Activated CD4-positive, alpha-beta memory T cell treated with anti-CD3 and anti-CD28 coated beads, Interleukin-2, amount 10 ng/mL, durations not matched to agents 7 days and 5 days (primary cell): ENCODE measurements at regions of chr4 and their contacts with region 1.

Region 1: DNA sequence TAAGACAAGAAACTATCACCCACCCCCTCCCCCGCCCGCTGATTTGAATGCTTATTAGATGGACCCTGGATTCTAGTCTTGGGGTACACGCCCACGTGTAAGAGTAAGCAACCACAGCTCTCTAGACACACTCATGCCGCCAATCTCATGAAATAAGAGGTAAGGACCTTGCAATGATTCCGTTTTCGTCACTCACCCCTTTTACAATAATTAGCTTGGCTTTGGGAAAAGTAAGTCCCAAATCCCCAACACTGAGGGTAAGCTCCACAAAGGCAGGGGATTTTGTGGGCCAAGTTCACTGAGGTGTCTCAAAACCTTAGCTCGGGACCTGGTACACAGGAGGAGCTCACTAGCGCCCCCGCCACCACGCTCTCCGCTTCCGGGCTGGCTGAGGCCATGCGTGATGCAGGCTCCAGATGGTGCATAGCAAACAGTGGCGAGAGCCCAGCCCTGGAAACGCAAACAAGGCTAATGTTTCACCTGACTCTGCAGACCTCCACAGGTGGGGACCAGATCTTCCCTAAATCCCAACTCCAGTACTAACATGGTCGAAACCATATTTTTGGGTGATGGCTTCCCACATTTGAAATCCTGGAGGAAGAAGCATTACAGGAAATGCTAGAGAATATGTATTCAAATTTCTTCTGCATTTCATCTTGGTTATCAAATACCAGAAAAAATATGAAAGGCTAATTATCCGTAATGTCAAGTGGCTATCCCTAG is 4.1 kb downstream of the PLAC8 start:
- DNase-seq: peak; percentile 91
- H3K4me3 Mint-ChIP-seq: peak overlapping the region; percentile 84
- H3K27ac Mint-ChIP-seq: peak overlapping the region; percentile 89
- H3K4me1 Mint-ChIP-seq: peaks cover 57% of the 10 kb centered on the region
- H3K27me3 Mint-ChIP-seq: peaks cover 3% of the 10 kb centered on the region

Region 2: DNA sequence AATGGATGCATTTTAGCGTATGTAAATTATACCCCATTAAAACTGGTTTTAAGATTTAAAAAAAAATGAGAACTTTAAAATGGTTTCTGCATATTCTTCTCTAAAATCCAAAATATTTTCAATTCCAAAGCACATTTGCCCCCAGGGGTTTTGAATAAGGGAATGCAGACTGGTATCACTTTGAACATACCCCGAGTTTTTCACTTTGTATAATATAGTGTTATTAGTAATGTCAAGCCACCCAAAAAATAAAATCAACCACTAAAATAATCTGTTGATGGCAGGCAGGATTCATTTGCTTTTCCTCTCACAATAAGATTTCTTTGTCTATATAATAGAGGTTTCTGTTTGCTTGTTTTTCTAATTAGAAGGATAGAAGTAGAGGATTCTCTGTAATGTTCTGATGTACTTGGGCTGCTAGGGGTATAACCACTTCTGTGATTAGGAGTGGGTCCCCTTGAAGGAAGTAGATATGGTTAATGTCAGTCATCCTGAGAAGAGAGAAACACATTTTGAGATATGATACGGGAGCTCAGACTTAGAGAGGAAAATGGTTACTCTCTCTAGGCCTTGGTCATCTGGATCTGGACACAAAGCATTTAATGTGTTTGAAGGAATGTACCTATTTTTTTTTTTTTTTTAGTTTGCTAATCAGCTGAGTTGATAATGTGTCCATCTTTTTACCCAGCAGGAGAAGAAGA is 90.4 kb before region 1 on chr4:
- CTCF ChIA-PET with region 1: no interaction called
- POLR2A ChIA-PET with region 1: no interaction called
- DNase-seq: no peak
- H3K4me3 Mint-ChIP-seq: no peak overlapping the region
- H3K27ac Mint-ChIP-seq: no peak overlapping the region
- H3K4me1 Mint-ChIP-seq: peaks cover 8% of the 10 kb centered on the region
- H3K27me3 Mint-ChIP-seq: peaks cover 5% of the 10 kb centered on the region

Region 3: GRCh38 chr4:83074086-83074704 is 36.2 kb before region 1 on chr4:
- CTCF ChIA-PET with region 1: interaction called, 31 read pairs
- POLR2A ChIA-PET with region 1: interaction called, 8 read pairs
- DNase-seq: peak; percentile 58
- H3K4me3 Mint-ChIP-seq: peak overlapping the region; percentile 19
- H3K27ac Mint-ChIP-seq: peak overlapping the region; percentile 17
- H3K4me1 Mint-ChIP-seq: peaks cover 22% of the 10 kb centered on the region
- H3K27me3 Mint-ChIP-seq: peaks cover 1% of the 10 kb centered on the region

Region 4: DNA sequence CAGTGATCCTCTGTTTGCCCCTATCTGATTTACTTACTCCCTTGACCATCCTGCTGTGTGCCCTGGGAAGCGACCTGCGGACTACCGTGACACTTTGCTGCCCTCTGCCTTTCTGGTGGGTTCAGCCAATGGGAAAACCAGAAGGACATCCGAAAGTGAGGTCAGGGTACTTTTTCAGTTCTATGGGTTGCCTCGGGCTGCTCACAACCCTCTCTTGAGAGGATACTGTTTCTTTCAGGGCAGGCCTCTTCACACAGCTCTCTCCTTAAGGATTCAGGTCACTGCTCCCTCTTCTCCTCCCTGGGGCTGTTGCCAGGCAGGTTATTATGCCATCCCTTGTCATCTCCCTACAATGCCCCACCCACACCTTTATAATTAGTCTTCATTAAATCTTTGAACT is 17.3 kb before region 1 on chr4:
- CTCF ChIA-PET with region 1: interaction called, 15 read pairs
- POLR2A ChIA-PET with region 1: interaction called, 15 read pairs
- DNase-seq: no peak
- H3K4me3 Mint-ChIP-seq: no peak overlapping the region
- H3K27ac Mint-ChIP-seq: no peak overlapping the region
- H3K4me1 Mint-ChIP-seq: no peaks in the 10 kb centered on the region
- H3K27me3 Mint-ChIP-seq: no peaks in the 10 kb centered on the region

Region 5: DNA sequence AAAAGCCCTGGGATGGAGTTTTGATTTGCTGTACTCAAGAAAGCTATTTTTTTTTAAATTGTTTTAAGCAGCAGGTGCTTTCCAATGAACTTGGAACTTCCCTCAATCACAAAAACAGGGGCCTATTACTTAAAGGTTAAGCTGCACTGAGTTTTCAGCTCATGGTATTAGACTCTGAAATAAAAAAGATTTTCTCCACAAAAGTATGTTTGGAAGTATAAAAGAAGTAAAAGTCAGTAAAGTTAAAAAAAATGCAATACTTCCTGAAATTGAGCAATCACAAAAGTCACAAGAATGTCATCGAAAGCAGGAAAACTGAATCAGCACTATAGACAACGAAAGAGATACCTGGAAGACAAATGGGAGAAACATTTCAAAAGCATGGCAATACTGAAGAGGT is 43.0 kb after region 1 on chr4:
- CTCF ChIA-PET with region 1: no interaction called
- POLR2A ChIA-PET with region 1: no interaction called
- DNase-seq: no peak
- H3K4me3 Mint-ChIP-seq: no peak overlapping the region
- H3K27ac Mint-ChIP-seq: no peak overlapping the region
- H3K4me1 Mint-ChIP-seq: peaks cover 14% of the 10 kb centered on the region
- H3K27me3 Mint-ChIP-seq: peaks cover 26% of the 10 kb centered on the region

Region 6: GRCh38 chr4:83212041-83212851 is 101.9 kb after region 1 on chr4:
- CTCF ChIA-PET with region 1: interaction called, 20 read pairs
- POLR2A ChIA-PET with region 1: interaction called, 123 read pairs
- DNase-seq: peak; percentile 74
- H3K4me3 Mint-ChIP-seq: peak overlapping the region; percentile 40
- H3K27ac Mint-ChIP-seq: peak overlapping the region; percentile 89
- H3K4me1 Mint-ChIP-seq: peaks cover 66% of the 10 kb centered on the region
- H3K27me3 Mint-ChIP-seq: peaks cover 41% of the 10 kb centered on the region

Region 7: GRCh38 chr4:83259586-83259985 is 149.2 kb after region 1 on chr4:
- CTCF ChIA-PET with region 1: interaction called, 21 read pairs
- POLR2A ChIA-PET with region 1: interaction called, 3 read pairs
- DNase-seq: no peak
- H3K4me3 Mint-ChIP-seq: no peak overlapping the region
- H3K27ac Mint-ChIP-seq: no peak overlapping the region
- H3K4me1 Mint-ChIP-seq: peaks cover 5% of the 10 kb centered on the region
- H3K27me3 Mint-ChIP-seq: no peaks in the 10 kb centered on the region